ENCODE measurements at regions of chr3 and their contacts with region 1.

Region 1: DNA sequence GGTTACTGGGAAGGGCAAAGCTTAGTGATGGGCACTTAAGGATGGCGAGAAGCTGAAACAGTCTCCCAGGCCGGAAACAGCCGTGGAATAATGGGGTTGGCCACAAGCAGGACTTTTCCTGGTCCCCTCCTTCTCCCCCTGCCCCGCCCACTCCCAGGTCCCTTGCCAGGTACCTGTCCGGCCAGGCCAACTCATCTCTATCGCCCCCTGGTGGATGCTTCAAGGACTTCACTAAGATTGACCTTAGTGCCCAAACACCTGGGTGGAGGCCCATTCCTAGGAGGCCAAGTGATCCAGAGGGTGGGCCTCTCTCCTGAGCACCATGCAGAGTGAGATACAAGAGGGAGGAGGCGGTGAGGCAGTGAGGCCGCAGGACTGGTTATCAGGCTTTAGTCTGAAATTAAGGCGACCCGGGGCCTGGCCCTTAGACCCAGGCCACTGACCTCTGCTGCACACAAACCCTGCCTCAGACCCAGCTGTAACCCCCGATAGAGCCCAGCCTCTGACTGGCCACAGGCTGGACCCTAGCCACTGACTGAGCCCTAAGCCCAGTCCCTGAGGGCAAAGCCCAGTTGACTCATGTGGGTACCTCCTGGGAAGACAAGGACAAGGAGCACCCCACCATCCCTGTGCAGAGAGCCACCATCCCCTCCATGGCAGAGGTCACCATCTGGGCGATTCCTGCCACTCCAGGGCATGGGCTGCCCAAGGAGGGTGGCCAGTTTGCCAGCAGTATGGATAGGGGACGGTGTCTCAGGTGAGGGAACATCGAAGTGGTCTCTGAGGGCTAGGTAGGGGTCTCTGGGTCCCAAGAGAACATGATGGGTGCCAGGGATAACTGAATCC is 37.6 kb downstream of the VIPR1 start:
- DNase-seq: peak; percentile 71
- ATAC-seq: peak; percentile 65
- H3K4me3 ChIP-seq: no peak overlapping the region
- H3K4me3 Mint-ChIP-seq: no peak overlapping the region
- H3K27ac ChIP-seq: no peak overlapping the region
- H3K27ac Mint-ChIP-seq: no peak overlapping the region
- H3K4me1 ChIP-seq: peaks cover 0 to 4% of the 10 kb centered on the region in 2 donors
- H3K4me1 Mint-ChIP-seq: no peaks in the 10 kb centered on the region
- H3K27me3 ChIP-seq: no peaks in the 10 kb centered on the region
- H3K27me3 Mint-ChIP-seq: no peaks in the 10 kb centered on the region
- CTCF ChIP-seq: peak; percentile 83

Region 2: GRCh38 chr3:41893977-41894376 is 646.1 kb before region 1 on chr3:
- CTCF ChIA-PET with region 1: no interaction called
- POLR2A ChIA-PET with region 1: no interaction called
- intact Hi-C with region 1: loop called (anchors 5 kb)
- DNase-seq: peak; percentile 63
- ATAC-seq: no peak
- H3K4me3 ChIP-seq: no peak overlapping the region
- H3K4me3 Mint-ChIP-seq: no peak overlapping the region
- H3K27ac ChIP-seq: no peak overlapping the region
- H3K27ac Mint-ChIP-seq: no peak overlapping the region
- H3K4me1 ChIP-seq: no peaks in the 10 kb centered on the region
- H3K4me1 Mint-ChIP-seq: no peaks in the 10 kb centered on the region
- H3K27me3 ChIP-seq: no peaks in the 10 kb centered on the region
- H3K27me3 Mint-ChIP-seq: no peaks in the 10 kb centered on the region
- CTCF ChIP-seq: peak; percentile 80

Region 3: GRCh38 chr3:42425736-42426407 is 114.2 kb before region 1 on chr3:
- CTCF ChIA-PET with region 1: interaction called, 4 read pairs
- POLR2A ChIA-PET with region 1: no interaction called
- intact Hi-C with region 1: loop called (anchors 5 kb)
- DNase-seq: no peak
- ATAC-seq: no peak
- H3K4me3 ChIP-seq: no peak overlapping the region
- H3K4me3 Mint-ChIP-seq: no peak overlapping the region
- H3K27ac ChIP-seq: no peak overlapping the region
- H3K27ac Mint-ChIP-seq: no peak overlapping the region
- H3K4me1 ChIP-seq: no peaks in the 10 kb centered on the region
- H3K4me1 Mint-ChIP-seq: no peaks in the 10 kb centered on the region
- H3K27me3 ChIP-seq: peaks cover 0 to 24% (median 0%) of the 10 kb centered on the region in 4 experiments
- H3K27me3 Mint-ChIP-seq: peaks cover 36% of the 10 kb centered on the region
- CTCF ChIP-seq: no peak

Measured in B cell (primary cell).